ENCODE measurements at regions of chr18 and their contacts with region 1.

Region 1: GRCh38 chr18:47748847-47749599 is 181.4 kb downstream of the SMAD2 start:
- DNase-seq: peak; percentile 74 to 98 (median 85)
- ATAC-seq: peak; percentile 100
- H3K4me3 ChIP-seq: peak overlapping the region in 1 of 2 donors; percentile 15
- H3K27ac ChIP-seq: no peak overlapping the region
- H3K4me1 ChIP-seq: peaks cover 0 to 8% of the 10 kb centered on the region in 2 donors
- H3K27me3 ChIP-seq: peaks cover 0 to 20% of the 10 kb centered on the region in 2 donors
- CTCF ChIP-seq: peak; percentile 100

Region 2: DNA sequence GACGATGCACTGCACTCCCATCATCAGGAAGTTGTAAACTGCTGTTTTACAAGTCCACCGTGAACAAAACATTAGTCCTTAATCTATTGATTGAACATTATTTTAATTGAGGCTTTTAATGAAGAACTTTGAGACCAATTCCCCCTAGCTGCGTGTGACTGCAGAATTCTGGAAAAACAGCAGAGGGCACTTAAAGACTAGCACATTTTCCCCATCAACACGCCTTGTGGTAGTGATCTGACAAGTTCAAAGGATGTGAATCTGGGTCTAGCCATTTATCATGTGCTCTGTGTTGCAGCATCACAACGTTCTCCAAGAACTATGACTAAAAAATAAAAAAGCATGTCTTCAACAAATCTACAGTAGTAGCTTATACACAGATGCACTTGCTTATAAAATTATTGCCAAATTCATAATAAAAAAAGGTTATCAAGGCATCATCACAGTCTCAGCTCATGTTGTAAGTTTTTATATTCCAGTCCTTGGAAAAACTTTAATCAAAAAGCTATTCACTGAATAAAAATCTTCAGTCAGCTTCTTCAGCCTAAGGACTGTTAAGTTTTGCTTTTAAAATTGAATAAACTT is 533.4 kb before region 1 on chr18:
- intact Hi-C with region 1: loop called in 1 of 2 experiments (anchors 5 kb)
- DNase-seq: peak in 2 of 4 donors; percentile 19 to 43
- ATAC-seq: peak; percentile 81
- H3K4me3 ChIP-seq: no peak overlapping the region
- H3K27ac ChIP-seq: no peak overlapping the region
- H3K4me1 ChIP-seq: no peaks in the 10 kb centered on the region
- H3K27me3 ChIP-seq: peaks cover 9 to 30% of the 10 kb centered on the region in 2 donors
- CTCF ChIP-seq: peak; percentile 31 to 42

Region 3: GRCh38 chr18:47595815-47596496 is 153.1 kb before region 1 on chr18:
- intact Hi-C with region 1: loop called in 1 of 2 experiments (anchors 10 kb)
- DNase-seq: peak in 1 of 4 donors; percentile 14
- ATAC-seq: peak; percentile 80
- H3K4me3 ChIP-seq: no peak overlapping the region
- H3K27ac ChIP-seq: no peak overlapping the region
- H3K4me1 ChIP-seq: no peaks in the 10 kb centered on the region
- H3K27me3 ChIP-seq: peaks cover 0 to 23% of the 10 kb centered on the region in 2 donors
- CTCF ChIP-seq: peak in 1 of 2 donors; percentile 10